ENCODE measurements at regions of chr15 and their contacts with region 1.

Region 1: DNA sequence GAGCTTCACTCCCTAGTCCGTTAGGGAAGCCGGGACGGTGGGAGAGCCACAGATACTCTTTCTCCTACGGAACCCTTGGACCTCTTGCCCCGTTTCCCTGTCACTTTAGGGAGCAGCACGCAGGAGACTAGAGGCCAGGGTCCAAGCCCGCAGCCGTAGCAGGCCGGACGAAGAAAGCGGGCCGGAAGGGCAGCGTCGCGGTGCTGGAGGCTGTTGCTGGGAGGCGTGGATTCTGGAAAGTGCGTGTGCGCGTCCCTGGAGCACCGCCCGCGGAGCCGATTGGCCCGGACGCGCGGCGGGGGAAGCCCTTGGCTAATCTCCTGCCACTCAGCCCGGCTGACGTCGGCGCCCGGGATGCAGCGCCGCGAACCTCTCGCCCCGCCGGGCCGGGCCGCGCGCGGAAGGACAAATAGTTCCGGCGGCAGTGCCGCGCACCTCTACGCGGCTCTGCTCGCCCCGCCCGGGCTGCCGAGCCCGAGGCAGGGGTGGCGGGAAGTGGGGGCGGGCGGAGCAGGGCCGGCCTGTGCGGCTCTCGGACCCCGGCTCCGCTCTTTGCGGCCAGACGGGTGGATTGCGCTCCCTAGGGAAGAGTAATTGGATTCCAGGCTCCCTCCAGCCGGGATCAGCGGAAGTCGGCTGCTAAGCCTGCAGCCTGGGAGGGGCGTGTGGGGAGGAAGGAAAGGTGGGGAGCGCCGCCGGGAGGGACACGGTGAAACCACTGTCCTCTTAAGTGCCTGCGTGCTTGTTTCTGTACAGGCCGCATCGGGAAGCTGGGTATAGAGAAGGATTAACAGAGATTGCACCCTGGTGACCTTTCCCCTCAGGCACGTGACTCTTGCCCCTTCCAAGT is 31.3 kb upstream of the TCF12 start:
- DNase-seq: peak; percentile 93
- H3K4me3 Mint-ChIP-seq: peak overlapping the region; percentile 81
- H3K27ac Mint-ChIP-seq: peak overlapping the region; percentile 61
- H3K4me1 Mint-ChIP-seq: peaks cover 24% of the 10 kb centered on the region
- H3K27me3 Mint-ChIP-seq: no peaks in the 10 kb centered on the region
- CTCF ChIP-seq: no peak

Region 2: DNA sequence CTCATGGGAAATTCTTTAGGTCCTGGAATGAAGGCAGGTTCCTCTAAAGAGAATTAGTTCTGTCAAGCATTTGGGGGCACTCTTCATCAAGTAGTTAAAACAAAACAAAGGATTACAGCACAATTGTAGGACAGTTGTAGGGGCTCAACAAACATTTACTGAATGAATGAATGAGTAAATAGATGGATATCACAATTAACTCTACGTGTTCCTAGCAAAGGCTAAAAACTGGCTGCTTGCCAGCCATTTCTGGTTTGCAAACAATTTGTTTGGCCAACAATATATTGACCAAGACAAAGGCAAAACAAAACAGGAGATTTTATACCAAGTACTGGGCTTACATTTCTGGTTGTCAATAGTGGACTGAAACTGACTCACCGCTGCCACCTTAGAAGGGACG is 270.6 kb before region 1 on chr15:
- CTCF ChIA-PET with region 1: no interaction called
- POLR2A ChIA-PET with region 1: no interaction called
- intact Hi-C with region 1: loop called (anchors 10 kb)
- DNase-seq: no peak
- H3K4me3 Mint-ChIP-seq: no peak overlapping the region
- H3K27ac Mint-ChIP-seq: no peak overlapping the region
- H3K4me1 Mint-ChIP-seq: no peaks in the 10 kb centered on the region
- H3K27me3 Mint-ChIP-seq: no peaks in the 10 kb centered on the region
- CTCF ChIP-seq: no peak

Region 3: GRCh38 chr15:56672721-56673120 is 214.4 kb before region 1 on chr15:
- CTCF ChIA-PET with region 1: no interaction called
- POLR2A ChIA-PET with region 1: no interaction called
- intact Hi-C with region 1: no loop called
- DNase-seq: no peak
- H3K4me3 Mint-ChIP-seq: no peak overlapping the region
- H3K27ac Mint-ChIP-seq: no peak overlapping the region
- H3K4me1 Mint-ChIP-seq: no peaks in the 10 kb centered on the region
- H3K27me3 Mint-ChIP-seq: no peaks in the 10 kb centered on the region
- CTCF ChIP-seq: no peak

Region 4: DNA sequence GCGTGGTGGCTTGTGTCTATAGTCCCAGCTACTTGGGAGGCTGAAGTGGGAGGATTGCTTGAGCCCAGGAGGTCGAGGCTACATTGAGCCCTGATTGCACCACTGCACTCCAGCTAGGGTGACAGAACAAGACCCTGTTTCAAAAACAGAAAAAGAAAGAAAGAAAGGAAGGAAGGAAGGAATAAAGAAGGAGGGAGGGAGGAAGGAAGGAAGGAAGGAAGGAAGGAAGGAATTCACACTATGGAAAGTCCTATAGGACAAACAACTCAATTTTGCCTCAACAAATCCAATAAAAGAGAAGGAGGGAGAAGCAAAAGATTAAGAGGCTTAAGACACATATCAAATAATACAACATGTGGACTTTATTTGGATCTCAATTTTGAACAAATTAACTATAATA is 14.8 kb after region 1 on chr15:
- CTCF ChIA-PET with region 1: no interaction called
- POLR2A ChIA-PET with region 1: interaction called, 13 read pairs
- intact Hi-C with region 1: no loop called
- DNase-seq: no peak
- H3K4me3 Mint-ChIP-seq: no peak overlapping the region
- H3K27ac Mint-ChIP-seq: no peak overlapping the region
- H3K4me1 Mint-ChIP-seq: peaks cover 4% of the 10 kb centered on the region
- H3K27me3 Mint-ChIP-seq: no peaks in the 10 kb centered on the region
- CTCF ChIP-seq: no peak

Region 5: GRCh38 chr15:57281321-57281720 is 394.2 kb after region 1 on chr15:
- CTCF ChIA-PET with region 1: no interaction called
- POLR2A ChIA-PET with region 1: no interaction called
- intact Hi-C with region 1: no loop called
- DNase-seq: no peak
- H3K4me3 Mint-ChIP-seq: no peak overlapping the region
- H3K27ac Mint-ChIP-seq: no peak overlapping the region
- H3K4me1 Mint-ChIP-seq: peaks cover 5% of the 10 kb centered on the region
- H3K27me3 Mint-ChIP-seq: no peaks in the 10 kb centered on the region
- CTCF ChIP-seq: no peak

Measured in MCF 10A (cell line).